ENCODE measurements at regions of chr5 and their contacts with region 1.

Region 1: GRCh38 chr5:10452768-10453331 is 11.2 kb downstream of the ROPN1L start:
- DNase-seq: peak; percentile 95
- ATAC-seq: peak; percentile 80
- H3K4me3 ChIP-seq: no peak overlapping the region
- H3K27ac ChIP-seq: 0 out of 2 replicates have a peak overlapping the region, but pooled peaks have one; percentile 4
- H3K4me1 ChIP-seq: peaks cover 26% of the 10 kb centered on the region
- H3K27me3 ChIP-seq: no peaks in the 10 kb centered on the region
- CTCF ChIP-seq: peak; percentile 94
- POLR2A ChIP-seq: peak; percentile 41; the same call in 1 of the 2 replicates
- RAD21 ChIP-seq: peak; percentile 99

Region 2: GRCh38 chr5:10627160-10627701 is 174.4 kb after region 1 on chr5:
- CTCF ChIA-PET with region 1: interaction called, 34 read pairs
- POLR2A ChIA-PET with region 1: no interaction called
- dilution Hi-C with region 1: no loop called
- in situ Hi-C with region 1: loop called (anchors 5 kb)
- intact Hi-C with region 1: loop called (anchors 1 kb)
- DNase-seq: no peak
- ATAC-seq: peak; percentile 8
- H3K4me3 ChIP-seq: peak overlapping the region; percentile 11; the same call in 1 of the 2 replicates
- H3K27ac ChIP-seq: peak overlapping the region; percentile 32; the same call in 1 of the 2 replicates
- H3K4me1 ChIP-seq: peaks cover 8% of the 10 kb centered on the region
- H3K27me3 ChIP-seq: no peaks in the 10 kb centered on the region
- CTCF ChIP-seq: no peak
- POLR2A ChIP-seq: no peak
- RAD21 ChIP-seq: no peak

Region 3: GRCh38 chr5:10695055-10695649 is 242.3 kb after region 1 on chr5:
- CTCF ChIA-PET with region 1: no interaction called
- POLR2A ChIA-PET with region 1: no interaction called
- dilution Hi-C with region 1: no loop called
- in situ Hi-C with region 1: no loop called
- intact Hi-C with region 1: loop called (anchors 2 kb)
- DNase-seq: peak; percentile 69
- ATAC-seq: peak; percentile 74
- H3K4me3 ChIP-seq: no peak overlapping the region
- H3K27ac ChIP-seq: no peak overlapping the region
- H3K4me1 ChIP-seq: peaks cover 26% of the 10 kb centered on the region
- H3K27me3 ChIP-seq: no peaks in the 10 kb centered on the region
- CTCF ChIP-seq: peak; percentile 85
- POLR2A ChIP-seq: no peak
- RAD21 ChIP-seq: peak; percentile 93

Region 4: GRCh38 chr5:11104651-11105112 is 651.8 kb after region 1 on chr5:
- CTCF ChIA-PET with region 1: no interaction called
- POLR2A ChIA-PET with region 1: no interaction called
- dilution Hi-C with region 1: no loop called
- in situ Hi-C with region 1: no loop called
- intact Hi-C with region 1: loop called (anchors 5 kb)
- DNase-seq: no peak
- ATAC-seq: no peak
- H3K4me3 ChIP-seq: no peak overlapping the region
- H3K27ac ChIP-seq: no peak overlapping the region
- H3K4me1 ChIP-seq: no peaks in the 10 kb centered on the region
- H3K27me3 ChIP-seq: peaks cover 4% of the 10 kb centered on the region
- CTCF ChIP-seq: no peak
- POLR2A ChIP-seq: no peak
- RAD21 ChIP-seq: no peak

Region 5: GRCh38 chr5:11494340-11494739 is 1041.5 kb after region 1 on chr5:
- CTCF ChIA-PET with region 1: no interaction called
- POLR2A ChIA-PET with region 1: no interaction called
- dilution Hi-C with region 1: no loop called
- in situ Hi-C with region 1: no loop called
- intact Hi-C with region 1: loop called (anchors 10 kb)
- DNase-seq: no peak
- ATAC-seq: no peak
- H3K4me3 ChIP-seq: no peak overlapping the region
- H3K27ac ChIP-seq: no peak overlapping the region
- H3K4me1 ChIP-seq: no peaks in the 10 kb centered on the region
- H3K27me3 ChIP-seq: no peaks in the 10 kb centered on the region
- CTCF ChIP-seq: peak; percentile 45
- POLR2A ChIP-seq: no peak
- RAD21 ChIP-seq: peak; percentile 17; the same call in 1 of the 2 replicates

Measured in IMR-90 (cell line).